Posterior cingulate gyrus (tissue), 11 donors: ENCODE measurements at regions of chr5 and their contacts with region 1.

Region 1: DNA sequence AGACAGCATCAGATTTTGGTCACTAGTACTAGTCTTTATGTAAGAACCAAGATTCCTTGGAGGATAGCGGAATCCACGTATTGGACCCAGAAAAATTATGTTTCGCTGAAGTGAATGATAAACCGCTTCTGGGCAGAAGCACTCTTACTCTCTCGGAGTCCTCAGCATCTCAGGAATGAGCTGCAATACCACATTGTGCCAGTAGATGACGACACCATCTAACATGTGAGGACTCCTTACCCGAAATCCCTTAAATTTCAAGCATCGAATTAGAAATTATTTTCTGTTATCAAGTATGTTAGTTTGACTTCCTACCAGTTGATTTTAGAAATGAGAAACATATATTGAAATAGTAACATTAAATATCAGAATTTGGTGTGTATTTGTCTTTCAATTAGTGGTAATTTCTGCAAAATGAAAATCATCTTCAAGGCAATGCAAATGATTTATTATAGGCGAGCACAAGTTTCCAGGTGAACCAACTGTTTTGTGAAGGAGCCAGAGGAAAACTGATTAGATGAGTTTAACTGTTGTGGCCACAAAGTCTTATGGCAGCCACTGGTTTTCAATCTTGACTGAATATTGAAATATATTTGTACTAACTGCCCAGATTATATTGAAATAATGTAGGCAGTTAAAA is 66.0 kb upstream of the CAMK4 start:
- DNase-seq: peak in 7 of 10 donors; percentile 16 to 86 (median 74)

Region 2: GRCh38 chr5:111278845-111279504 is 120.8 kb after region 1 on chr5:
- intact Hi-C with region 1: loop called (anchors 5 kb)
- DNase-seq: peak in 7 of 10 donors; percentile 10 to 86 (median 58)

Region 3: GRCh38 chr5:111461255-111461671 is 303.0 kb after region 1 on chr5:
- intact Hi-C with region 1: loop called (anchors 1 kb)
- DNase-seq: peak in 9 of 10 donors; percentile 15 to 94 (median 33)